Kidney (tissue), 22 donors: ENCODE measurements at regions of chr10 and their contacts with region 1.

Region 1: DNA sequence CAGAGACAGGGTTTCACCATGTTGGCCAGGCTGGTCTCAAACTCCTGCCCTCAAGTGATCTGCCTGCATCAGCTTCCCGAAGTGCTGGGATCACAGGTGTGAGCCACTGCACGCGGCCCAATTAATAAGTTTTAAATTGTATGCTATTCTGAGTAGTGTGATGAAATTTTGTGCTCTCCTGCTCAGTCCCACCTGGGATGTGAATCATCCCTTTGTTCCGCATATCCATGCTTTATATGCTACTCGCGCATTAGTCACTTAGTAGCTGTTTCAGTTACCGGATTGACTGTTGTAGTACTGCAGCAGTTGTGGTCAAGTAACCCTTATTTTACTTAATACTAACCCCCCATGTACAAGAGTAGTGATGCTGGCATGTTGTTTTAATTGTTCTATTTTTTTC is 47.3 kb upstream of the OIT3 start:
- DNase-seq: no peak
- H3K4me3 ChIP-seq: no peak overlapping the region
- H3K27ac ChIP-seq: no peak overlapping the region
- H3K4me1 ChIP-seq: no peaks in the 10 kb centered on the region
- H3K27me3 ChIP-seq: no peaks in the 10 kb centered on the region
- CTCF ChIP-seq: no peak

Region 2: GRCh38 chr10:72364239-72364777 is 481.9 kb before region 1 on chr10:
- intact Hi-C with region 1: loop called (anchors 10 kb)
- DNase-seq: peak; percentile 92 to 96 (median 94)
- H3K4me3 ChIP-seq: peak overlapping the region in 1 of 3 donors; percentile 14
- H3K27ac ChIP-seq: no peak overlapping the region
- H3K4me1 ChIP-seq: peaks cover 0 to 4% (median 0%) of the 10 kb centered on the region in 3 donors
- H3K27me3 ChIP-seq: no peaks in the 10 kb centered on the region
- CTCF ChIP-seq: peak; percentile 98

Region 3: DNA sequence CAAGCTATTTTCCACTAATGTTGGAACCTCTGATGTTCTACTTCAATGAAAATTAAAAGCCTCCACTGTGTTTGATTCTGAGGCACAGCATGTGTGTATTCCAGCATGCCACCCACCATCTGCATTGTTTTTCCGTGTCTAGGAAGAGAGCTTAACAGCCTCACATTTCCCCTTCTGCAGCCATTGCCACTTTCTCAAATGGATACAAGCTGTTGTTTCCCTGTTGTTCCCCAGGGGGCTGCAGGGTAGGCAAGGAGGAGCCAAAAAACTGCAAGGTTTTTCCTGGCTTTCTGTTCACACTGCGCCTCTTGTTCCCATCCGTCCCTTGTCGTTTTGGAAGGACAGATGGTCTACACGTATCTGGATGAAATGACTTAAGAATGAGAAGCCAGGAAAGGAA is 419.2 kb before region 1 on chr10:
- intact Hi-C with region 1: no loop called
- DNase-seq: peak in 2 of 5 donors; percentile 18 to 57
- H3K4me3 ChIP-seq: no peak overlapping the region
- H3K27ac ChIP-seq: no peak overlapping the region
- H3K4me1 ChIP-seq: no peaks in the 10 kb centered on the region
- H3K27me3 ChIP-seq: no peaks in the 10 kb centered on the region
- CTCF ChIP-seq: no peak